ENCODE measurements at regions of chr2 and their contacts with region 1.

Region 1: GRCh38 chr2:71068218-71069035 is at the start of gene NAGK:
- DNase-seq: peak; percentile 97 to 99 (median 97)
- ATAC-seq: peak; percentile 92 to 97 (median 96)
- H3K4me3 ChIP-seq: peak within 1 kb of the TSS; percentile 60 to 98 (median 84)
- H3K27ac ChIP-seq: peak within 1 kb of the TSS; percentile 73 to 98 (median 93)
- H3K4me1 ChIP-seq: peaks cover 4 to 74% (median 25%) of the 10 kb centered on the region in 12 donors
- H3K27me3 ChIP-seq: no peaks in the 10 kb centered on the region
- CTCF ChIP-seq: peak in 2 of 12 donors; percentile 3 to 10
- POLR2A ChIP-seq: peak; percentile 63 to 97
- total RNA-seq, gene NAGK: 38.3 to 143 (median 46.4) TPM

Region 2: GRCh38 chr2:71130113-71130904 is 61.9 kb after region 1 on chr2 and contains the starts of genes MCEE and MPHOSPH10:
- intact Hi-C with region 1: loop called in 2 of 10 experiments (anchors 1 to 2 kb)
- DNase-seq: peak; percentile 91 to 95 (median 93)
- ATAC-seq: peak; percentile 97 to 98 (median 97)
- H3K4me3 ChIP-seq: peak within 1 kb of the TSS; percentile 77 to 98 (median 88)
- H3K27ac ChIP-seq: peak within 1 kb of the TSS; percentile 86 to 99 (median 94)
- H3K4me1 ChIP-seq: peaks cover 0 to 45% (median 26%) of the 10 kb centered on the region in 12 donors
- H3K27me3 ChIP-seq: no peaks in the 10 kb centered on the region
- CTCF ChIP-seq: no peak
- POLR2A ChIP-seq: peak in 1 of 2 donors; percentile 58
- total RNA-seq, gene MCEE: 23.8 to 36.8 (median 29.3) TPM
- total RNA-seq, gene MPHOSPH10: 12.3 to 35.6 (median 22.7) TPM

Region 3: DNA sequence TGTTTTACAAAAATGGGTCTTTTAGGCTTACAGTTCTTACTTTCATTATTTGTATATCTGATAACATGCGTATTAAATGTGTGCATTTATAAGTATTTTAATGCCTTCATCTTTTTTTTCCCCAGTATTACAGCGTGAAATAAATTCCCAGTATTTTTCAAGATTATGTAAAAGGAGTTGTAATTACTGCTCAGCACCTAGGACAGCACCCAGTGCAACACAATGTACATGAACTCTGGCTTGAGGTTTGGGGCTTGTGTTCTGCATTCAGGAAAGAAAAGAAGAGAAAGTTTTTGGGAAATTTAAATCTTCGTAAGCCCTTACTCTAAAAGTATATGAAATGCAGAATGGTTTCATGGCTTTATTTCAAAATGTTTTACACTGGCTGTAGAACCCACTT is 279.9 kb after region 1 on chr2:
- intact Hi-C with region 1: no loop called
- DNase-seq: no peak
- ATAC-seq: peak in 2 of 4 donors; percentile 45 to 59
- H3K4me3 ChIP-seq: no peak overlapping the region
- H3K27ac ChIP-seq: no peak overlapping the region
- H3K4me1 ChIP-seq: peaks cover 0 to 31% (median 10%) of the 10 kb centered on the region in 12 donors
- H3K27me3 ChIP-seq: no peaks in the 10 kb centered on the region
- CTCF ChIP-seq: no peak
- POLR2A ChIP-seq: no peak